Posterior cingulate gyrus (tissue), 11 donors: ENCODE measurements at regions of chr7 and their contacts with region 1.

Region 1: GRCh38 chr7:94907026-94907810 is at the start of gene PPP1R9A:
- DNase-seq: peak; percentile 40 to 94 (median 61)

Region 2: DNA sequence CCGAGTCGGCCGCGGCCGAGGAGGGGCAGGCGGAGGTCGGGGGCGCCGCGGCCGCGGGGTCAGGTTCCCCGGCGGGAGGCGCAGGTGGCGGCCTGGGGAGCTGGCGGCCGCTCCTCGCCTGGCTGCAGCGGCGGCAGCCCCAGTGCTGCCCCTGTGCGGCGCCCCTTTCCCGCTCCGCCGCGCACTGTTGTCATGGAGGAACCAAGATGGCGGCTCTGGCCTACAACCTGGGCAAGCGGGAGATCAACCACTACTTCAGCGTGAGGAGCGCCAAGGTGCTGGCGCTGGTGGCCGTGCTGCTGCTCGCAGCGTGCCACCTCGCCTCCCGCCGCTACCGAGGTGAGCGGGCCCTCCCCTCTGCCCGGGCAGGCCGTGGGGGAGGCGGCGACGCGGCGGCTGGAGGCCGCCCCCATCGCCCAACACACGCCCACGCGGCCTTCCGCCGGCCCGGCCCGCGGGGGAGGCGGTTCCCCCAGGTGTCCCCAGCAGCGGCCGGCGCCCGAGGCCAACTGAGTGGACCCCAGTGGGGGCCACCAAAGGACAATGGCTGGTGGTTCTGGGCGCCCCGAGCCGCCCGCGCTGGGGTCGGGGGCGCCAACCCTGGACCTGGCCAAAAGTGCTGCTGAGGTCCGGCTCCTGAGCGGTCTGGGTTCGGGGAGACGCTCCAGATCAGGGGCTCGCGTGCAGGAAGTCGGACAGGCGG is 397.2 kb before region 1 on chr7:
- intact Hi-C with region 1: loop called (anchors 10 kb)
- DNase-seq: peak; percentile 59 to 95 (median 70)

Region 3: DNA sequence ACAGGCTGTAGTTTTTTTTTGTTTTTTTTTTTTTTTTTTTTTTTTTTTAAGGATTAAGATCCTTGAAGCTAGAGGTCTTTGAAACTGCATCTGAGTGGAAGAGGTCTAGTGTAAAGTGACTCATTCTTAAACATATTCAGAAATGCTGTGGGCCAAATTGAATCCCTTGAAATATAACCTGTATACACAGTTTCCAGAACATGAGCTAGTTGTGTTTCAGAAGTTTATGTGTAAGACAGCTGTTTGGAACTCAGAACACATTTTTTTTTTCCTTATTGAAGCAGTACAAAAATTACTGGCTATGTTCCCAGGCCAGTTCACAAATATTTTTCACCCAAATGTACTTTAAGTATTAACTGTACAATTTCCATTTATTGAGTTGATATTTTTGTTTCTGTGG is 68.1 kb after region 1 on chr7:
- intact Hi-C with region 1: no loop called
- DNase-seq: no peak

Region 4: DNA sequence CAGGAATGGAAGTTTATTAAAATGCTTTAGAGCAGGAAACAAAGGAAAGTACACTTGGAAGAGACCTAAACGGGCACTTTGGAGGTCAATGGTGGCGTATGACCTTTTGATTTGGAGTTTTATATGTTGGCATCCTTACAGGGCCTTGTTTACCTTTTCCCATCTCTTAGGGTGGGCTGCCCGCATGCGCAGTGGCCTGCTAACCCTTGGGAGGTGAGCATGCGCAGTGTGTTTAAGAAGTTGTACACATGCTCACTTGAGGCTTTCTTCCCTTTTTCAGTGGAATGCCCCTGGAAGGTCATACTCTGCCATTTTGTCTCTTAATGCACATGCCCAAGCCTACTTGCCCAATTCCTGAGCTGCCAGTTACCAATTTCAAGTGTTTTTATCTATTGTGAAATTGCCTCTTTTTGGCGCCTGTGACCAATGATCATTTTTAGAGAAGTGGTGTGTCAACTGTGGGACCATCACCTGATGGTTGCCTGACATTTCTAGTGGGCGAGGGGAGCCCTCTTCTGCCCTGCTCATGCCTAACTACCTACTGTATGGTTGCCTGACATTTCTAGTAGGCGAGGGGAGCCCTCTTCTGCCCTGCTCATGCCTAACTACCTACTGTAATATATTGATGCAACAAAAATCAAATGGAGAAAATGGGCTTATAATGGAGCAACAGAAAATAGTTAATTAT is 138.2 kb after region 1 on chr7:
- intact Hi-C with region 1: loop called (anchors 5 kb)
- DNase-seq: peak in 6 of 10 donors; percentile 17 to 92 (median 56)

Region 5: DNA sequence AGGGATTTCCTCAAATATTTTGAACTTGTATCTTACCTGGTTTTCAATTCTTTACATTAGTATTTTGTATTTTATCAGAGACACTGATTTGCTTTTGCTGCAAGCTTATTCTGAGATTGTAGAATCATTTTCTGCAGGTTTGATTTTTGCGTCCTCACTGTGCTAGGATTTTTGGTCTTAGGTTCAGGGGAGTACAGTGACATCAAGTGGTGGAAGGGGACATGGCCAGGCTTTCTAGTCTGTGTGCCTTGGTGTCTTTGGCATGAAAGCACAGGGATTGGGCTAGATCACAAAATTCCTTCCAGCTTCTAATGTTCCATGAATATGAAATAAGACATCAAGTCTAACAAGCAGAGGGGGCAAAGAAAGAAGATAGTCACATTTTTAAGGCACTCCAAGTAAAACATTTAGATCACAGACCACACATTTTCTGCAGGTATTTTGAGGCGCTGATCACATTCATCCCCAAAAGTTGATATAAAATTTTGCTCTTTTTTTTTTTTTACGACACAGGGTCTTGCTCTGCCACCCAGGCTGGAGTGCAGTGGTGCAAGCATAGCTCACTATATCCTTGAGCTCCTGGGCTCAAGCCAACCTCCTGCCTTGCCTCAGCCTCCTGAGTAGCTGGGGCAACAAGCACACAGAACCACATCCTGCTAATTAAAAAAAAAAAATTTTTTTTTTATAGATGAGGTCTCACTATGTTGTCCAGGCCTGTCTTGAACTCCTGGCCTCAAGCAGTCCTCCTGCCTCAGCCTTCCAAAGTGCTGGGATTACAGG is 292.8 kb after region 1 on chr7:
- intact Hi-C with region 1: loop called (anchors 5 kb)
- DNase-seq: peak in 8 of 10 donors; percentile 31 to 91 (median 55)

Region 6: GRCh38 chr7:95286096-95286495 is 378.9 kb after region 1 on chr7:
- intact Hi-C with region 1: no loop called
- DNase-seq: no peak